Psoas muscle (tissue), 8 donors: ENCODE measurements at regions of chr7 and their contacts with region 1.

Region 1: DNA sequence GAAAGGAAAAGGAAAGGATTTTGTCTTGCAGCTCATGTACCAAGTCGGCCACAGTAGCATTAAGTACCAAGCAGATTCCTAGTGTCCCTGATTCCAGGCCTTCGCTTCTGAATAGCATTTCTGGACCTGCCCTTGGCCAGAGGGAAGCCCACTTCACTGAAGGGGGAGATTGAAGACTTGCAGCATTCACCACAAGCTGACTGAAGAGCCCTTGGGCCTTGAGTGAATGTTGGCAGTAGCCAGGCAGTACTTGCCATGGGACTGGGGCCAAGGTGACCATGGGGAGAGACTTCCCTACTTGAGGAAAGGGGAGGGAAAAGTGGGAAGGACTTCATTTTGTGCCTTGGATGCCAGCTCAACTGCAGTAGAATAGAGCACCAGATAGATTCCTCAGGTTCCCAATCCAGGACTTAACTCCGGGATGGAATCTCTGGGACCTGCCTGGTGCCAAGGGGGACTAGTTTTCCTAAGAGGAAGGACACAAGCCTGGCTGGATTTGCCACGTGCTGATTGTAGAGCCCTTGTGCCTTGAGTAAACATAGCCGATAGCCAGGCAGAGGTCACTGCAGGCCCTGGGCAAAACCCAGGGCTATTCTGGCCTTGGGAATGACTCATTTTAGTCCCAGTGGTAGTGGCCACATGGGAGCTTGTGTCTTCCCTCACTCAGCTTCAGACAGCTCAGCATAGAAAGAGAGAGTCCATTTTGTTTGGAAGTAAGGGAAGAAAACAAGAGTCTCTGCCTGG is 141.7 kb upstream of the KCND2 start:
- DNase-seq: peak in 1 of 2 donors; percentile 14
- ATAC-seq: no peak
- H3K4me3 ChIP-seq: no peak overlapping the region
- H3K27ac ChIP-seq: no peak overlapping the region
- H3K4me1 ChIP-seq: no peaks in the 10 kb centered on the region
- H3K27me3 ChIP-seq: no peaks in the 10 kb centered on the region
- CTCF ChIP-seq: no peak

Region 2: GRCh38 chr7:119868387-119868786 is 262.9 kb before region 1 on chr7:
- intact Hi-C with region 1: no loop called
- DNase-seq: no peak
- ATAC-seq: no peak
- H3K4me3 ChIP-seq: no peak overlapping the region
- H3K27ac ChIP-seq: no peak overlapping the region
- H3K4me1 ChIP-seq: no peaks in the 10 kb centered on the region
- H3K27me3 ChIP-seq: no peaks in the 10 kb centered on the region
- CTCF ChIP-seq: no peak

Region 3: DNA sequence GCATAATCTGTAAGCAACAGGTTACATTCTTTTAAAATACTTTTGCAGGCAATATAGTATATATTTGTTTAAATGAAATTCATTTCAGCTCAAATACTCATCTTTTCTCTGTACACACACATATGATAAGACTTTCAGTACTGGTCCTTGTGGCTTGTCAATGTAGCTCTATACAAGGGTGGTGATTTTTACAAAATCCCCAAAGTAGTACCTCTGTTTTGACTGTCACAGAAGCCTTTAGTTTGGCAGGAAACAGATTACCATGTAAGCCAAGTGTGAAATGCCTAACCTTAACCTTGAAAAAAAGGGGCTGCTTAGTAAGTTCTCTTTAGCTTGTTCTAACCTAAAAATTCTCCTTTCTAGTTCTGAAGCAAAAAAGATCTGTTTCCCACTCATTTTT is 229.7 kb after region 1 on chr7:
- intact Hi-C with region 1: no loop called
- DNase-seq: no peak
- ATAC-seq: no peak
- H3K4me3 ChIP-seq: no peak overlapping the region
- H3K27ac ChIP-seq: no peak overlapping the region
- H3K4me1 ChIP-seq: no peaks in the 10 kb centered on the region
- H3K27me3 ChIP-seq: no peaks in the 10 kb centered on the region
- CTCF ChIP-seq: no peak

Region 4: GRCh38 chr7:120512701-120513100 is 381.4 kb after region 1 on chr7:
- intact Hi-C with region 1: loop called in 1 of 2 experiments (anchors 5 kb)
- DNase-seq: no peak
- ATAC-seq: no peak
- H3K4me3 ChIP-seq: no peak overlapping the region
- H3K27ac ChIP-seq: no peak overlapping the region
- H3K4me1 ChIP-seq: no peaks in the 10 kb centered on the region
- H3K27me3 ChIP-seq: no peaks in the 10 kb centered on the region
- CTCF ChIP-seq: no peak